Calu3 (cell line): ENCODE measurements at regions of chr1 and their contacts with region 1.

Region 1: DNA sequence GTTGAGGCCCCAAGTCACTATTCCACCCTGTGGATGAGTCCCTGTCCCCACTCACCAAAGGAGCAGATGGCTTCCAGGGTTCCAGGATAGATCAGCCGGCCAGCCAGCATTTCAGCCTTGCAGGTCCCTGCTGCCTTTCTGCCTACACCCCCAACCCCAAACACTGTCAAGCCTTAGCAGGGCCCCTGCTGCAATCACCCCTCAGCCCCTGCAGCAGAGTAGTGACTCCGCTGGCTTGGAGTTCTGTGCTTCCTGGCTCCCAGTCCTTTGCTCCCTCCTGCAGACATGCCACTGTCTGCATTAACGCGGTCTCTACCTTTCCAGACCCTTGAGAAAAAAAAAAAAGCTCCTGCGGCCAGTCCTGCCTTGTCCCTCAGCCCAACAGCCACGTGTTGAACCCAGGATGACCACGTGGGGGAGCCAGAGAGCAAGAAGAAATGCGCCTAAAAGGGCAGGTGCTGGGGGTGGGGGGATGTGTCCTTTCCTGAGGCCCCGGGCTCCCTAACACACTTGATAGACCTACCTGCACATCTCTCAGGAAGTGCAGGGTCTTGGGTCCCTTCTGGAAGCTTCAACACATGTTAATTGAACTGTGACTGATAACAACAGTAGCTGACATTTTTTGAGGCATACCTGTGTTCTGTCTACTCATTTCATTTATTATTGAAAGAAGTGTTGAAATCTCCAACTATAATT is 37.4 kb downstream of the RASSF5 start:
- DNase-seq: peak; percentile 91
- H3K4me3 Mint-ChIP-seq: no peak overlapping the region
- H3K27ac Mint-ChIP-seq: no peak overlapping the region
- H3K4me1 Mint-ChIP-seq: peaks cover 12% of the 10 kb centered on the region
- H3K27me3 Mint-ChIP-seq: peaks cover 2% of the 10 kb centered on the region
- CTCF ChIP-seq: peak; percentile 90

Region 2: GRCh38 chr1:206507284-206508129 is 37.2 kb before region 1 on chr1 and contains the start of gene RASSF5:
- CTCF ChIA-PET with region 1: interaction called, 5 read pairs
- intact Hi-C with region 1: loop called (anchors 5 kb)
- DNase-seq: peak; percentile 84
- H3K4me3 Mint-ChIP-seq: peak within 1 kb of the TSS; percentile 82
- H3K27ac Mint-ChIP-seq: peak within 1 kb of the TSS; percentile 28
- H3K4me1 Mint-ChIP-seq: peaks cover 62% of the 10 kb centered on the region
- H3K27me3 Mint-ChIP-seq: peaks cover 45% of the 10 kb centered on the region
- CTCF ChIP-seq: no peak
- total RNA-seq, gene RASSF5: 6.1 and 6.5 TPM in 2 replicates

Region 3: DNA sequence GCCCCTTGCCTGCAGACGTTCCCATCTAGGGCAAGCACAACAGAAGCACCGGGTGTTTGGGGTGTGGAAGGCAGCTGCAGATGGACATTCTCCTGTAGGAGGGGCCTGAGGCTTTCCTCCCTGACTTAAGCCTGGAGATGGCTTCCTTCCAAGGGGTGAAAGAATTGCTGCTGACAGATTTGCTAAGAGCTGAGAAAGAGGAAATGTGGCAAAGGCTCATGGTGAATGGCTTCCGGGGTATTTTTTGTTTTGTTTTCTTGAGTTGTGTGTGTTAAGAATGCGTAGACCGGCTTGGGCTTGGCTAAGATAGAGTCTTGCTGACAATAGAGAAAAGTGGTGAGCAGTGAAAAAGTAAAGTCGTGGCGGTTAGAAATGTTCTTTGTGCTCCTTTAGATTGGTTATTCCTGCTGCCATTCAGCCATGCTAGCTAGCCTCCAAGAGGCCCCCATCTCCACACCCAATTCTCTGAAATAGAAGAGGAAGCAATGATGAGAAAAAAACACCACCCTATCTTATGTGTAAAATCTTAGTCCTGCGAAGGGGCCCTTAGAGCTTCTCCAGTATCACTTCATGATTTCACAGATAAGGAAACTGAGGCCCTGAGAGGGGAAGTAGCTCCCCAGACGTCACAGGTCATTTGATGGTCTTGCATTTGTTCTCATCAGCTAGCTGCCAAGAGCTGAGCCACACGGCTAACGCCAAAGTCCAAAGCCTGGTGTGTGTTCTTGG is 30.6 kb after region 1 on chr1:
- CTCF ChIA-PET with region 1: no interaction called
- intact Hi-C with region 1: no loop called
- DNase-seq: no peak
- H3K4me3 Mint-ChIP-seq: no peak overlapping the region
- H3K27ac Mint-ChIP-seq: no peak overlapping the region
- H3K4me1 Mint-ChIP-seq: no peaks in the 10 kb centered on the region
- H3K27me3 Mint-ChIP-seq: no peaks in the 10 kb centered on the region
- CTCF ChIP-seq: no peak

Region 4: DNA sequence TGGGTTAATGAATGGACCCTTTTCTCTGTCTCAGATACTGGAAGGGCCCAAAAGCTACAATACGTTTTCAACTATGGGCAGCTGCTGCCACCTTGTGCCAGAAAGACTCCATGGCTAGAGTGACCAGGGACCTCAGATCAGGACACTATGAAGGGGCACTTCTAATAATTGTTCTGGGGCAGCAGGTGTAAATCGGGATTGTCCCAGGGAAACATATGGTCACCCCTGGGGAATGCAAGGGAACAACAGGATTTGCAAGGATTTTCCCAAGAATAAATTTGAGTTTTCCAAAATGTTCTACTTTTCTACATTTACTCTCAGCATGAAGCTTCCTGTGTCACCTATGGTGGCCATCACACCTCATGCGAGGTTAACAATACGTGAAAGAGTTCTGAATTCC is 437.5 kb after region 1 on chr1:
- CTCF ChIA-PET with region 1: no interaction called
- intact Hi-C with region 1: no loop called
- DNase-seq: peak; percentile 76
- H3K4me3 Mint-ChIP-seq: no peak overlapping the region
- H3K27ac Mint-ChIP-seq: no peak overlapping the region
- H3K4me1 Mint-ChIP-seq: peaks cover 59% of the 10 kb centered on the region
- H3K27me3 Mint-ChIP-seq: no peaks in the 10 kb centered on the region
- CTCF ChIP-seq: peak; percentile 61